ENCODE measurements at regions of chr18 and their contacts with region 1.

Region 1: DNA sequence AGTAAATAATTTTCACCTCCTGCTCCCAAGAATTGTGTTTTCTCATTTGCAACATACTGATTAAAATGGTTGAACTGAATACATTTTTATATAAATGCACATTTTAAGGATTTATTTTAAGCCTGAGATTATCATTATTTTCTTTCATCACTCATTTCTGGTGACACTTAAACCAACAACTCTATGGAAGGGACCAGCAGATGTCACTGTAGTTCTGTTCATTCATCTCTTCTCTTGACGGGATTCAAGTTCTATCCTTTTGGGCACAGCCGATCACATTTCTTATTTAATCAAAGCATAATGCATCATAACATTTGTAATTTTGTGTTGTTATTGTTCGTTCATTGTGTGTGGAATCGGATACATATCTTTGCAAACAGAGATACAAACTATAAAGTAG is 417.9 kb downstream of the HRH4 start:
- DNase-seq: no peak
- ATAC-seq: no peak
- H3K4me3 Mint-ChIP-seq: no peak overlapping the region
- H3K27ac Mint-ChIP-seq: no peak overlapping the region
- H3K4me1 Mint-ChIP-seq: peaks cover 5% of the 10 kb centered on the region
- H3K27me3 Mint-ChIP-seq: peaks cover 6% of the 10 kb centered on the region
- CTCF ChIP-seq: no peak

Region 2: DNA sequence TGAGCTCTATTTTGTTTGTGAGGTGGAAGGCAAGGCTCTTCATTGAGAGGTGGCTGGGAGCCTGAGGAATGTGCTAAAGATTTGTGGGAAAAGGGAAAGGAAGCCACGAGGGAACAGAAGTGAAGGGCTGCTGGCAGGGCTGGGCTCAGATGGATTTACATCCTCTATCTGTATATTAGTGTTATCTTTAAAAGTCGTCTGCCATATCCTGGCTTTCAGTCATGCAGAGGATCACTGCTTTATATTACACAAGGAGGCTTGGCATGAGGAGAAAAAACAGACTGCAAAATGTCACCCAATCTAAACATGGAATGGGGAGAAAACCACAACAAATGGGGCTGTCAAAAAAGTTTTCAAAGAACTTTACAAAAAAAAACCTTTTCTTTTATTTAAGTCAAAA is 16.6 kb after region 1 on chr18:
- CTCF ChIA-PET with region 1: interaction called, 3 read pairs
- POLR2A ChIA-PET with region 1: interaction called, 10 read pairs
- intact Hi-C with region 1: no loop called
- DNase-seq: no peak
- ATAC-seq: no peak
- H3K4me3 Mint-ChIP-seq: no peak overlapping the region
- H3K27ac Mint-ChIP-seq: no peak overlapping the region
- H3K4me1 Mint-ChIP-seq: no peaks in the 10 kb centered on the region
- H3K27me3 Mint-ChIP-seq: peaks cover 5% of the 10 kb centered on the region
- CTCF ChIP-seq: no peak

Region 3: GRCh38 chr18:25062720-25063119 is 184.4 kb after region 1 on chr18:
- CTCF ChIA-PET with region 1: no interaction called
- POLR2A ChIA-PET with region 1: no interaction called
- intact Hi-C with region 1: loop called (anchors 1 kb)
- DNase-seq: no peak
- ATAC-seq: no peak
- H3K4me3 Mint-ChIP-seq: no peak overlapping the region
- H3K27ac Mint-ChIP-seq: no peak overlapping the region
- H3K4me1 Mint-ChIP-seq: no peaks in the 10 kb centered on the region
- H3K27me3 Mint-ChIP-seq: no peaks in the 10 kb centered on the region
- CTCF ChIP-seq: no peak

Region 4: DNA sequence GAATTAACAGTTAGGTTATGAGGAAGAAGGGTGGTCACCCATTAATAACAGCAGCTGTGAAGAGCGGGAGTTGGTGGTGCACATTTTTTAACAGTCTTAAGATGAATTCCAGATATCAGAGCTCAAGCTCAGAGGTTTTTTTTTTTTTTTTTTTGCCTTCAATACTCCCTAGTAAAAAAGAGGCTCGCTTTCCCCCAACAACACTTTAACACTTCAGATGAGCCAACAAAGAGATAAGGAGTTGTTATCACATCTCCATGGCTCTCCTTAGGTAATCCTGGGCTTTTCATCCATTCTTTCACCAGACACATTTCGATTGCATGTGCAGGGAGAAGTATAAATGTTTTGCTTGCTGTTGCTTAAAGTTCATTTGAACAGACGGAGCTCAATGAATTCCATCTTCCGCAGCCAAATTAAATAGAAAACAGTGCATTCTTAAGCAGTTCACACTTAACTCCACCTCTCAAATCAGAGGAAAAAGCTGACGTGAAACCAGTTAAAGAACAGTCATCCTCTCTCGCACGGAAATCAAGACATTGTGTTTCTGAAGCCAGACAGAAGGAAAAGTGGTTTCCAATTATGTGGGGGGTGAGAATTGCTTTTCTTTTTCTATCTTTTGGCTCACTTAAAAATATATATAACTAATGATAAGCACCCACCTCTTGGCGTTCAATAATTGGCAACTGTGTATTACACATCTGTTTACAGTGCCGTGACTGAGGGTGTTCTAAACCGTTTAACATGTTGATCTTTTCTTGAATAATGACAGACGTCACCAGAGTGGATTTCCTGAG is 355.4 kb after region 1 on chr18:
- CTCF ChIA-PET with region 1: interaction called, 3 read pairs
- POLR2A ChIA-PET with region 1: no interaction called
- intact Hi-C with region 1: loop called (anchors 2 kb)
- DNase-seq: no peak
- ATAC-seq: no peak
- H3K4me3 Mint-ChIP-seq: no peak overlapping the region
- H3K27ac Mint-ChIP-seq: no peak overlapping the region
- H3K4me1 Mint-ChIP-seq: no peaks in the 10 kb centered on the region
- H3K27me3 Mint-ChIP-seq: peaks cover 5% of the 10 kb centered on the region
- CTCF ChIP-seq: no peak

Region 5: DNA sequence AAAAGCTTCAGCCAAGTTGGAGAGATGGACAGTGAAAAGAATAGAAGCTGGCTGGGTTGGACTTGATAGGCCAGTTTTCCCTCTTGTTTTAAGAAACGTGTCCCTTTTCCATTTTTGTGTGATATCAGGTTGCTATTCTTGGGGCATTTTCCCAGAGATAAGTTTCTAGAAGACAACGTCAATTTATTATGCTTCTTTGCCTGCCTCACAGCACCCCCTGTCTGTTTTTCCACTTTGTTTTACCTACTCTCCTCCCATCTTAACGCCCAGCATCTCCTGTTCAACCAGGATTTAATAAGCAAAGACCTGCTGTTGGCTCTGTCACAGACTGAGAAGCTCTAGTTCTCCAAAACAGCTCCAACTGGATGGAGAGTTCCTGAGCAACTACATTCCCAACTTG is 791.5 kb after region 1 on chr18:
- CTCF ChIA-PET with region 1: interaction called, 4 read pairs
- POLR2A ChIA-PET with region 1: no interaction called
- intact Hi-C with region 1: loop called (anchors 2 kb)
- DNase-seq: no peak
- ATAC-seq: no peak
- H3K4me3 Mint-ChIP-seq: no peak overlapping the region
- H3K27ac Mint-ChIP-seq: no peak overlapping the region
- H3K4me1 Mint-ChIP-seq: no peaks in the 10 kb centered on the region
- H3K27me3 Mint-ChIP-seq: no peaks in the 10 kb centered on the region
- CTCF ChIP-seq: no peak

Region 6: DNA sequence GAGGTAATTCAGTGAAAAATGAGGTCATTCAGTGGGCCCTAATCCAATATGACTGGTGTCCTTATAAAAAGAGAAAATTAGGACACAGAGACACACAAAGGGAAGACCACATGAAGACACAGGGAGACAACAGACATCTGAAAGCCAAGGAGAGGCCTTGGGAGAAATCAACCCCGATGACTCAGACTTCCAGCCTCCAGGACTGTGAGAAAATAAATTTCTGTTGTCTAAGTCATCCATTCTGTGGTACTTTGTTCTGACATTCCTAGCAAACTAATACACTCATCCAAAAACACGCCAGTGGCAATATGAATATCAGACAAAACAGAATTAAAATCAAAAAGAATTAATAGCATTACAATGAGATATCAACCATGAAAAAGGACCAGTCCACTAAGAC is 908.5 kb after region 1 on chr18:
- CTCF ChIA-PET with region 1: no interaction called
- POLR2A ChIA-PET with region 1: no interaction called
- intact Hi-C with region 1: no loop called
- DNase-seq: no peak
- ATAC-seq: no peak
- H3K4me3 Mint-ChIP-seq: no peak overlapping the region
- H3K27ac Mint-ChIP-seq: no peak overlapping the region
- H3K4me1 Mint-ChIP-seq: no peaks in the 10 kb centered on the region
- H3K27me3 Mint-ChIP-seq: peaks cover 1% of the 10 kb centered on the region
- CTCF ChIP-seq: no peak

Region 7: GRCh38 chr18:25896178-25896780 is 1018.0 kb after region 1 on chr18:
- CTCF ChIA-PET with region 1: interaction called, 5 read pairs
- POLR2A ChIA-PET with region 1: no interaction called
- intact Hi-C with region 1: loop called (anchors 1 kb)
- DNase-seq: no peak
- ATAC-seq: peak; percentile 40
- H3K4me3 Mint-ChIP-seq: no peak overlapping the region
- H3K27ac Mint-ChIP-seq: no peak overlapping the region
- H3K4me1 Mint-ChIP-seq: no peaks in the 10 kb centered on the region
- H3K27me3 Mint-ChIP-seq: peaks cover 10% of the 10 kb centered on the region
- CTCF ChIP-seq: peak; percentile 64

Region 8: GRCh38 chr18:26335571-26336487 is 1457.5 kb after region 1 on chr18:
- CTCF ChIA-PET with region 1: no interaction called
- POLR2A ChIA-PET with region 1: no interaction called
- intact Hi-C with region 1: loop called (anchors 10 kb)
- DNase-seq: no peak
- ATAC-seq: no peak
- H3K4me3 Mint-ChIP-seq: no peak overlapping the region
- H3K27ac Mint-ChIP-seq: no peak overlapping the region
- H3K4me1 Mint-ChIP-seq: no peaks in the 10 kb centered on the region
- H3K27me3 Mint-ChIP-seq: no peaks in the 10 kb centered on the region
- CTCF ChIP-seq: no peak